ENCODE measurements at regions of chr3 and their contacts with region 1.

Region 1: DNA sequence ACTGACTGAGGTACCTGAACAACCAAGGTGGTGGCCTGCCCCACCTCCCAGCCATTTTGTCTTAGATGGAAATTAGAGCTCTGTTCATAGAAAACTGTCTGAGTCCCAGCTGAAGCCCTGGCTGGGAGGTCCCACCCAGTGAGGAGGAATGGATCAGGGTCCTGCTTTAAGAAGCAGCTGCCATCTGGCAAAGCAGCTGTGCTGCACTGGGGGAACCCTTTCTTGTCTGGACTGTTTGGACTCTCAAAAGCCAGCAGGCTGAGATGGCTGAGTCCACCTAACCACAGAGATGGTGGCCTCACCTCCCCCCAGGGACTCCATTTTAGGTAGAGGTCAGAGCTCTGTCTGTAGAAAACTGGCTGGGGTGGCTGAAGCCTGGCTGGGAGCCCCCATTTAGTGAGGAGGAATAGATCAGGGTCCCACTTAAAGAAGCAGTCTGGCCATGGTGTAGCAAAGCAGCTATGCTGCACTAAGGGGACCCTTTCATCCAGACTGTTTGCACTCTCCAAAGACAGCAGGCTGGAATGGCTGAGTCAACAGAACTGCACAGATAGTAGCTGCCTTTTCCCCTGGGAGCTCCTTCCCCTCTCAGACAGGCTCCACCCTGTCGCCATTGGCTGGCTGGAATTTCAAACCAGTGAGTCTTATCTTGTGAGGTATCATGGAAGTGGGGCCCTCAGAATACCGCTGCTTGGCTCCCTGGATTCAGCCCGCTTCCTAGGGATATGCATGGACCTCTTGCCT is 116.9 kb downstream of the EPHA6 start:
- DNase-seq: no peak
- ATAC-seq: no peak
- H3K4me3 ChIP-seq: no peak overlapping the region
- H3K27ac ChIP-seq: no peak overlapping the region
- H3K4me1 ChIP-seq: no peaks in the 10 kb centered on the region
- H3K27me3 ChIP-seq: no peaks in the 10 kb centered on the region
- CTCF ChIP-seq: no peak
- EP300 ChIP-seq: no peak
- POLR2A ChIP-seq: no peak
- RAD21 ChIP-seq: no peak

Region 2: GRCh38 chr3:96915465-96915864 is 15.8 kb before region 1 on chr3:
- CTCF ChIA-PET with region 1: no interaction called
- POLR2A ChIA-PET with region 1: no interaction called
- RAD21 ChIA-PET with region 1: no interaction called
- SMC1A ChIA-PET with region 1: no interaction called
- in situ Hi-C with region 1: no loop called
- intact Hi-C with region 1: loop called (anchors 1 kb)
- DNase-seq: no peak
- ATAC-seq: no peak
- H3K4me3 ChIP-seq: no peak overlapping the region
- H3K27ac ChIP-seq: no peak overlapping the region
- H3K4me1 ChIP-seq: no peaks in the 10 kb centered on the region
- H3K27me3 ChIP-seq: no peaks in the 10 kb centered on the region
- CTCF ChIP-seq: no peak
- EP300 ChIP-seq: no peak
- POLR2A ChIP-seq: no peak
- RAD21 ChIP-seq: no peak

Measured in GM12878 (cell line).